ENCODE measurements at regions of chr1 and their contacts with region 1.

Region 1: DNA sequence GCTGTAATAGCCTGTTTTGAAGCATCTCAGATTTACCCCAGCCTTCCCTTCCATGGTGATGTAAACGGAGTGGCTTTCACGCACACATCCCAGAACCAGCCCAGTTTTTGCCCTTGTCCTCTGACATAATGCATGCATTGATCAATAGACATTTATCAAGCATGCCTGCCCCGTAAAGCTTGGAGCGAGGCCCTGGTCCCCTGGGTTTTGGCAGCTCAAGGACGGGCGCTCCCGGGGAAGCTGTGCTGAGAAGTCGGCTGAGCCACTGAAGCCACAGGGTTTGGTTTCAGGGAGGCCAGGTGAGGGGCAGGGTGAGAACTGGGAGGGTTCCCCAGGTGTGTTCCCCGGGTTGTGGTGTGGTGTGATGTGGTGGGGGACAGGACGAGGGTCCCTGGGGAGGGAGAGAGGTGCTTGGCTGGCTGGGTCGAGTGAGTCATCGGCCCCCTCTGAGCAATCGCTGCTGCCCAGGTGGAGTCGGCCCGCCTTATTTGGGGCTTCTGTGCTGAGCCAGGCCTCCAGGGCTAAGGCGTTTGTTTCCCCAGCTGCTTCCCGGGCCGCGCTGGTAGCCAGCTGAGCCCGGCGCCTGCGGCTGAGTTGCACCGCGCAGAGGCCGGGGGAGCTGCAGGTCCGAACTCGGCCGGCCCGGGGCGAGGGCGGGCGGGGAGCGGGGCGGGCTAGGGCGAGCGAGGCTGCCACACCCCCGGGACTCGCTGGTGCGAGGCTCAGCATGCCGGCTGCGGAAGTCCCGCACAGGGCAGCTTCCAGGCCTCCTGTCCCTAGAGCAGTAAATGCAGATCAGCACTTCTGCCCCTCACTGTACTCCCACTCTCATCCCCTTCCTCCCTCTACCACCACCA is 23.6 kb downstream of the ATP2B4 start:
- DNase-seq: peak; percentile 86
- H3K4me3 Mint-ChIP-seq: peak overlapping the region; percentile 77
- H3K27ac Mint-ChIP-seq: peak overlapping the region; percentile 95
- H3K4me1 Mint-ChIP-seq: peaks cover 58% of the 10 kb centered on the region
- H3K27me3 Mint-ChIP-seq: no peaks in the 10 kb centered on the region

Region 2: DNA sequence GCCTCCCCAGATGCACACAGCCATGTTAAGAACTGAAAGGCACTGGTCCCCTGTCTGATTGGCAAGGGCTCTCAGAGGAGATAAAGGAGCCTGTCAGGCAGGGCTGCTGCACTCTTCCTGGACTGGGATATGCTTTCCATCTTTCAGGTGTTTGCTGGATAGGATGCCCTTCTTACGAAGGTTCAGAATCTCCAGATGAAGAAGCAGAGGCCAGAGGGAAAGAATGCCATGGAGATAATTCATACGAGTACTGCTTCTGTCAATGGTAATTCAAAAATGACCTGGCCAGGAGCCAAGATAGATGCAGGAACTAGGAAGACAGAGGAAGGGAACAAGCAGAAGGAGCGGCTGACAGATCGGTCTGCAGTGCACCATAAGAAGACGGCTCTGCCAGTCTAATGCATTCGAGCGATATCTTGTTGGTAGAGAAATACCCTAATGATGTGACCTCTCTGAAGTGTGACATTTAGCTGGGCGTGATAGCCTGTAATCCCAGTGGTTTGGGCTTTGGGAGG is 40.2 kb before region 1 on chr1:
- intact Hi-C with region 1: loop called (anchors 1 kb)
- DNase-seq: no peak
- H3K4me3 Mint-ChIP-seq: no peak overlapping the region
- H3K27ac Mint-ChIP-seq: peak overlapping the region; percentile 41
- H3K4me1 Mint-ChIP-seq: peaks cover 57% of the 10 kb centered on the region
- H3K27me3 Mint-ChIP-seq: peaks cover 2% of the 10 kb centered on the region

Region 3: GRCh38 chr1:203673550-203674427 is 23.6 kb after region 1 on chr1:
- intact Hi-C with region 1: loop called (anchors 1 kb)
- DNase-seq: peak; percentile 92
- H3K4me3 Mint-ChIP-seq: peak overlapping the region; percentile 75
- H3K27ac Mint-ChIP-seq: peak overlapping the region; percentile 96
- H3K4me1 Mint-ChIP-seq: peaks cover 53% of the 10 kb centered on the region
- H3K27me3 Mint-ChIP-seq: no peaks in the 10 kb centered on the region

Region 4: GRCh38 chr1:203702130-203702577 is 51.9 kb after region 1 on chr1:
- intact Hi-C with region 1: loop called (anchors 5 kb)
- DNase-seq: peak; percentile 88
- H3K4me3 Mint-ChIP-seq: no peak overlapping the region
- H3K27ac Mint-ChIP-seq: peak overlapping the region; percentile 76
- H3K4me1 Mint-ChIP-seq: peaks cover 14% of the 10 kb centered on the region
- H3K27me3 Mint-ChIP-seq: no peaks in the 10 kb centered on the region

Measured in activated CD4-positive, alpha-beta T cell treated with anti-CD3 and anti-CD28 coated beads, Interleukin-2, amount 10 ng/mL, durations not matched to agents 24 days and 14 days (primary cell).